Activated CD4-positive, alpha-beta T cell treated with anti-CD3 and anti-CD28 coated beads for 36 hours (primary cell): ENCODE measurements at regions of chrX and their contacts with region 1.

Region 1: DNA sequence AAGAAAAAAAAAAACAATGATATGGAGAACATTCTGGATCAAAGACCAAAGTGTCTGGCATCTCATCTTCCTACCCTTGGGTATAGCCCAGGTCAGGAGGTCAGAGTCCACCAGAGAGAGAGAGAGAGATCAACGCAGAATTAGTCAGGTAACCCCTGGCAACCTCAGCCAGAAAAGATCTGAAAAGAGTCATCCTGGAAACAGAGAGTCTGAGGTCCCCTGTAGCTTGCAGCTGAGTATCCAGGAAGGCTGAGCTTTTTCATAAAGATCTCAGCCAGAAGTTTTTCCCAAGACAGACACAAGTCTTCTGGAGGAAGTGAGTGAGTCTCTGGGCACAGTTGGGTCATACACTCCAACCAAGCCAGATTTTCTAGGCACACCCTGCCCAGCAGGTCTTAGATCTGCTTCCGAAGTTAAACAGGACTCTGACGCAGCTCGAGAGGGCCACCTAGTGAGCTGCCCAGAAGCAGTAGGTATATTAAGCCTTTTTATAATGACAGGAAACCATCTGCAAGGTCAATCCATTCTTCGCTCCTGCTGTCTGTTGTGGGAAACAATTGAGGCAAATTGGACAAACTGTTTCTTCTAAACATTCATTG is 35.7 kb downstream of the ACE2 start:
- DNase-seq: peak; percentile 49
- ATAC-seq: no peak
- H3K4me3 Mint-ChIP-seq: no peak overlapping the region
- H3K27ac Mint-ChIP-seq: no peak overlapping the region
- H3K4me1 Mint-ChIP-seq: no peaks in the 10 kb centered on the region
- H3K27me3 Mint-ChIP-seq: peaks cover 11% of the 10 kb centered on the region

Region 2: DNA sequence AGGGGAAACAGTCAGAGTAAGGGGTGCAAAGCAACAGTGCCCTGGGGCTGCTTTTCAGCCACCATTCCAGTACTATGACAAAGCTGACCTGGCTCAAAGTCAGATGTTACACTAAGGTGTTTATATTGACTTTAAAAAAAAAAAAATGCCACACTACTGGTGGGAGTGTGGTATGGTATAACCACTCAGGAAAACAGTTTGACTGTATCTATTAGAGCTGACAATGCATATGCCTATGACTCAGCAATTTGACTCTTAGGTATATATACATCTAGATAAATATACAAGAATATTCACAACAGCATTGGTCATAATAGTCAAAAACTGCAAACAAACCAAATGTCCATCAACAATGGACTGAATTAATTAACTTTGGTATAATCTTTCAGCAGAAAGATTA is 310.2 kb before region 1 on chrX:
- CTCF ChIA-PET with region 1: no interaction called
- POLR2A ChIA-PET with region 1: no interaction called
- intact Hi-C with region 1: no loop called
- DNase-seq: no peak
- ATAC-seq: no peak
- H3K4me3 Mint-ChIP-seq: no peak overlapping the region
- H3K27ac Mint-ChIP-seq: no peak overlapping the region
- H3K4me1 Mint-ChIP-seq: no peaks in the 10 kb centered on the region
- H3K27me3 Mint-ChIP-seq: no peaks in the 10 kb centered on the region

Region 3: GRCh38 chrX:15349046-15349445 is 216.0 kb before region 1 on chrX:
- CTCF ChIA-PET with region 1: interaction called, 3 read pairs
- POLR2A ChIA-PET with region 1: no interaction called
- intact Hi-C with region 1: loop called in 1 of 2 experiments (anchors 2 kb)
- DNase-seq: peak; percentile 11
- ATAC-seq: peak; percentile 58
- H3K4me3 Mint-ChIP-seq: no peak overlapping the region
- H3K27ac Mint-ChIP-seq: no peak overlapping the region
- H3K4me1 Mint-ChIP-seq: no peaks in the 10 kb centered on the region
- H3K27me3 Mint-ChIP-seq: peaks cover 2% of the 10 kb centered on the region

Region 4: DNA sequence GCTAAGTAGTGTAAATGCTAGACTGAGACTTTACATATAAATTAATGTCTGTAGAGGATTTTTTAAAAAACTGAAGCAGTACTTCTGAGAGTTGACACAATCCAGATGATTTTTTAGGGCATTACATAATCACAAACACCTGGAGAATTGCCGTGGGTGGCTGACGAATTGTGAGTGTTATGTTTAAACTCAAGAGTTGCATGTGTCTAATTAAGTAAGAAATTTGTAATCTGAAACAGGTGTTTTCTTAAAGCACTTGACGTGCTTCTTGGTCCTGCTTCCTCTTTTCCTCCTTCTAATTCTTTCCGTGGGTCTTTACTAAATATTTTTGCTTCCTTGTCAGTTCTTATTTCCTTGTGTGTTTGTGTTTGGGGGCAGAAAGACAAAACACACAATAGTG is 99.7 kb before region 1 on chrX:
- CTCF ChIA-PET with region 1: no interaction called
- POLR2A ChIA-PET with region 1: no interaction called
- intact Hi-C with region 1: no loop called
- DNase-seq: peak; percentile 8
- ATAC-seq: no peak
- H3K4me3 Mint-ChIP-seq: no peak overlapping the region
- H3K27ac Mint-ChIP-seq: no peak overlapping the region
- H3K4me1 Mint-ChIP-seq: peaks cover 3% of the 10 kb centered on the region
- H3K27me3 Mint-ChIP-seq: no peaks in the 10 kb centered on the region

Region 5: DNA sequence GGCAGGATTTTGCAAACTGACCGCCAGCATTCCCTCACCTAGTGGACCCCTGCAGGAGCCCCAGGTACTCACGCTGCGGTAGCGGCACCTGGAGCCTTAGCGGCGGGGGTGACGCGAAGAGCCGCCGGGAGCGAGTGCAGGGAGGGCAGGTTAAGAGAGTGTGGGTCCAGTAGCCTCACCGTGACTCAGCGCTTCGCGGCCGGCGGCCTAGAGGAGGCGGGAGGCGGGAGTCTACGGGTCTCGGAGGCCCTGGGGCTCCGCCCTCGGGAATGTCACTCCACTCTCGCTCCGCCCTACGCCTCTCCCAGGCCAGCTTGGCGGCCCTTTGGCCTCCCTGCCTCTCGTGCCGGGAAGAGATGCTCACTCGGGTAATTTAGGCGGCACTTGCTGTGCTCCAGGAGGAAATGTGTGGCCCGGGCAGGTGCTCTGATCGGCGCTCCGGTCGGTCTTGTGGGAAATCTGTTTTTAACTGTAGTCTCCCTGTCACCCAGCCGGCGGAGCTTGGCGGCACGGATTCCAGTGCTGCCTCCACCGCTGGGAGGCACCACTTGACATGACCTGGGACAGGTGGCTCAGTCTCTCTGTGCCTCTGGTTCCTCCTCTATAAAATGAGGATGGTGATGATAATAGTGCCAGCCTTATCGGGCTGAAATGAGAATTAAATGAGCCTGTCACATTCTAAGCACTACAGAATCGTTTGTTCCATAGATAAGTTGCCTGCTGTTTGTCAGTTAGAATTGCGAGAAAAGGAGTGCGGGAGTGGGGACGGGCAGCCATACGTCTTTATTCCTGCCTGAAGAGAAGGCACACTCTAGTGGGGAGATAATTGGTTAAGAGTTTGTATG is 71.7 kb before region 1 on chrX and contains the start of gene PIR:
- CTCF ChIA-PET with region 1: no interaction called
- POLR2A ChIA-PET with region 1: no interaction called
- intact Hi-C with region 1: loop called (anchors 2 to 5 kb)
- DNase-seq: peak; percentile 77
- ATAC-seq: peak; percentile 95
- H3K4me3 Mint-ChIP-seq: peak within 1 kb of the TSS; percentile 75
- H3K27ac Mint-ChIP-seq: peak within 1 kb of the TSS; percentile 47
- H3K4me1 Mint-ChIP-seq: peaks cover 4% of the 10 kb centered on the region
- H3K27me3 Mint-ChIP-seq: peaks cover 2% of the 10 kb centered on the region
- total RNA-seq, gene PIR: 1.4 to 2.3 TPM